ENCODE measurements at regions of chr10 and their contacts with region 1.

Region 1: DNA sequence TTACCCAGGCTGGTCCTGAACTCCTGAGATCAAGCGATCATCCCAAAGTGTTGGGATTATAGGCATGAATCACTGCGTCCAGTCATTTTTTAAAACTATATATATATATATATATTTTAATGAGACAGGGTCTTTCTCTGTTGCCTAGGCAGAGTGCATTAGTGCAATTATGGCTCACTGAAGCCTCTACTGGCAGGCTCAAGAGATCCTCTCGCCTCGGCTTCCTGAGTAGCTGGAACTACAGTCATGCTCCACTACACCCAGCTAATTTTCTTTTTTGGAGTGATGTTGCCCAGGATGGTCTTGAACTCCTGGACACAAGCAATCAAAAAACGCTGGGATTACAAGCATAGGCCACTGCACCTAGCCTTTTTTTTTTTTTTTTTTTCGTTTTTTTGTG is 55.3 kb upstream of the KAT6B start:
- DNase-seq: no peak
- ATAC-seq: no peak
- H3K4me3 ChIP-seq: no peak overlapping the region
- H3K27ac ChIP-seq: no peak overlapping the region
- H3K4me1 ChIP-seq: peaks cover 7% of the 10 kb centered on the region
- H3K27me3 ChIP-seq: no peaks in the 10 kb centered on the region
- CTCF ChIP-seq: 0 out of 2 replicates have a peak, but pooled peaks have one; percentile 28

Region 2: GRCh38 chr10:74706966-74707365 is 64.1 kb before region 1 on chr10:
- CTCF ChIA-PET with region 1: no interaction called
- POLR2A ChIA-PET with region 1: no interaction called
- intact Hi-C with region 1: no loop called
- DNase-seq: no peak
- ATAC-seq: no peak
- H3K4me3 ChIP-seq: no peak overlapping the region
- H3K27ac ChIP-seq: no peak overlapping the region
- H3K4me1 ChIP-seq: peaks cover 15% of the 10 kb centered on the region
- H3K27me3 ChIP-seq: no peaks in the 10 kb centered on the region
- CTCF ChIP-seq: no peak

Region 3: GRCh38 chr10:74882831-74883230 is 111.8 kb after region 1 on chr10:
- CTCF ChIA-PET with region 1: no interaction called
- POLR2A ChIA-PET with region 1: interaction called, 10 read pairs
- intact Hi-C with region 1: no loop called
- DNase-seq: peak; percentile 90
- ATAC-seq: peak; percentile 84
- H3K4me3 ChIP-seq: no peak overlapping the region
- H3K27ac ChIP-seq: peak overlapping the region; percentile 7
- H3K4me1 ChIP-seq: peaks cover 33% of the 10 kb centered on the region
- H3K27me3 ChIP-seq: no peaks in the 10 kb centered on the region
- CTCF ChIP-seq: no peak

Region 4: GRCh38 chr10:74977913-74978847 is 207.1 kb after region 1 on chr10:
- CTCF ChIA-PET with region 1: no interaction called
- POLR2A ChIA-PET with region 1: no interaction called
- intact Hi-C with region 1: no loop called
- DNase-seq: no peak
- ATAC-seq: no peak
- H3K4me3 ChIP-seq: no peak overlapping the region
- H3K27ac ChIP-seq: no peak overlapping the region
- H3K4me1 ChIP-seq: 0 out of 2 replicates have a peak, but pooled peaks cover 4% of the 10 kb centered on the region
- H3K27me3 ChIP-seq: no peaks in the 10 kb centered on the region
- CTCF ChIP-seq: no peak

Measured in PC-3 (cell line).